AG04450 (cell line): ENCODE measurements at regions of chr20 and their contacts with region 1.

Region 1: GRCh38 chr20:31560094-31560899 is 44.8 kb upstream of the ID1 start:
- DNase-seq: peak; percentile 62
- H3K4me3 ChIP-seq: no peak overlapping the region
- H3K27ac ChIP-seq: peak overlapping the region; percentile 99
- H3K27me3 ChIP-seq: no peaks in the 10 kb centered on the region
- CTCF ChIP-seq: peak; percentile 94

Region 2: GRCh38 chr20:31514159-31515071 is 45.9 kb before region 1 on chr20 and contains the start of gene HM13:
- CTCF ChIA-PET with region 1: interaction called, 10 read pairs
- POLR2A ChIA-PET with region 1: no interaction called
- DNase-seq: peak; percentile 86
- H3K4me3 ChIP-seq: peak within 1 kb of the TSS; percentile 99
- H3K27ac ChIP-seq: peak within 1 kb of the TSS; percentile 75
- H3K27me3 ChIP-seq: peaks cover 2% of the 10 kb centered on the region
- CTCF ChIP-seq: peak; percentile 79
- polyA plus RNA-seq, gene HM13: 167 and 203 TPM in 2 replicates

Region 3: DNA sequence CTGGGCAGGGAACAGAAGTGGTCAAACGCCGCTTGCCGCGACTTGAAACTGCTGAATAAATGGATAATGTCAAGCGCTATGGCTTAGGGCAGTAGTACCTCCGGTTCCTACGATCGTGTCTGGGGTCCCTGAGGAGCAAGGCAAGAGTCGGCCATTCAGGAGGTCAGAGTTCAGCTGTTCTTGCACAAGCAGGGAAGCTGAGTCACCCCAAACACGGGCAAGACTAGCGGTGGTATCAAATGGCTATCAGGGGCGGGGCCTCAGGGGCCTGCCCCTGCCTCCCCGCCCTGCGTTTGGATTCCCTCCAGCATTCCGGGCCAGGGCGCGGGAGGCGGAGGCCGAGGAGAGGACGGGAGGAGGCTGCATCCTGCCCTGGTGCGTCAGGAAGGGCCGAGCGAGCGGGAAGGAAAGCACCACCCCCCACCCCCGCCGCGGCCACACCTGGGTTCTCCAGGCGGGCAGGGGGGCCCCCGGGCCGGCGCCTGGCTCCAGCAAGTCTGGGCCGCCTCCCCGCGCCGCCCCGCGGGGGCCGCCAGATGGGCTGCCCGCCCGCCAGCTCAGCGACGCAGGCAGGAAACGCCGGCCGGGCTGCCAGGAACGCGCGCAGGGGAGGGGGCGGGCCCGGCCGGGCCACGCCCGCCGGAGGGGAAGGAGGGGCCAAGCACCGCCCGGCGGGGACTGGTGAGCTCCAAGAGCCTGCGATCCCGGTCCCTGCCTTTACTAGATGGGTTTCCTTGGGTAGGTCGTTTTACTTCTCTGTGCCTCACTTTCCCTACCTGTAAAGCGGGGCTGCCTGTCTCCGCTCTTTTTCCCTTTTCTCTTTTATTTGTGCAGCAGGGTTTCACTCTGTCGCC is 12.6 kb after region 1 on chr20:
- CTCF ChIA-PET with region 1: interaction called, 148 read pairs
- POLR2A ChIA-PET with region 1: interaction called, 17 read pairs
- DNase-seq: peak; percentile 97
- H3K4me3 ChIP-seq: peak overlapping the region; percentile 57
- H3K27ac ChIP-seq: peak overlapping the region; percentile 95
- H3K27me3 ChIP-seq: no peaks in the 10 kb centered on the region
- CTCF ChIP-seq: no peak

Region 4: DNA sequence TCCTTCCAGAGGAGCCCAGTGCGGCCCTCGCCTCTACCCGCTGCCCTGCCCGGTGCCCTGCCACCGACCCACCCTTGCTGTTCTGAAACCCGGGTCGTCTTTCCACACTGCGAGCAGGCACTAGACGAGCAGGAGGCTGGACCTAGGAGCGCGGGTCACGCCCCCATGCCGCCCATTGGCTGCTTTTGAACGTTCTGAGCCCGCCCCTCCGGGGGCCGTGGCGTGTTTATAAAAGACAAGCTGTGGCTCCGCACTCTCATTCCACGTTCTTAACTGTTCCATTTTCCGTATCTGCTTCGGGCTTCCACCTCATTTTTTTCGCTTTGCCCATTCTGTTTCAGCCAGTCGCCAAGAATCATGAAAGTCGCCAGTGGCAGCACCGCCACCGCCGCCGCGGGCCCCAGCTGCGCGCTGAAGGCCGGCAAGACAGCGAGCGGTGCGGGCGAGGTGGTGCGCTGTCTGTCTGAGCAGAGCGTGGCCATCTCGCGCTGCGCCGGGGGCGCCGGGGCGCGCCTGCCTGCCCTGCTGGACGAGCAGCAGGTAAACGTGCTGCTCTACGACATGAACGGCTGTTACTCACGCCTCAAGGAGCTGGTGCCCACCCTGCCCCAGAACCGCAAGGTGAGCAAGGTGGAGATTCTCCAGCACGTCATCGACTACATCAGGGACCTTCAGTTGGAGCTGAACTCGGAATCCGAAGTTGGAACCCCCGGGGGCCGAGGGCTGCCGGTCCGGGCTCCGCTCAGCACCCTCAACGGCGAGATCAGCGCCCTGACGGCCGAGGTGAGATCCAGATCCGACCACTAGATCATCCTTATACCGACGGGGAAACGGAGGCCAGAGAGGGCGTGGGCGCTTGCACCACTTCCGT is 45.0 kb after region 1 on chr20 and contains the start of gene ID1:
- CTCF ChIA-PET with region 1: interaction called, 1,107 read pairs
- POLR2A ChIA-PET with region 1: interaction called, 55 read pairs
- DNase-seq: peak; percentile 78
- H3K4me3 ChIP-seq: peak within 1 kb of the TSS; percentile 90
- H3K27ac ChIP-seq: peak within 1 kb of the TSS; percentile 70
- H3K27me3 ChIP-seq: no peaks in the 10 kb centered on the region
- CTCF ChIP-seq: no peak
- polyA plus RNA-seq, gene ID1: 7.8 and 11.1 TPM in 2 replicates

Region 5: GRCh38 chr20:31704225-31705119 is 144.2 kb after region 1 on chr20:
- CTCF ChIA-PET with region 1: interaction called, 10 read pairs
- POLR2A ChIA-PET with region 1: no interaction called
- DNase-seq: no peak
- H3K4me3 ChIP-seq: no peak overlapping the region
- H3K27ac ChIP-seq: peak overlapping the region; percentile 75
- H3K27me3 ChIP-seq: no peaks in the 10 kb centered on the region
- CTCF ChIP-seq: no peak